WTC11 (cell line): ENCODE measurements at regions of chr13 and their contacts with region 1.

Region 1: GRCh38 chr13:53250266-53250875 is 221.8 kb downstream of the OLFM4 start:
- DNase-seq: no peak
- ATAC-seq: peak; percentile 64
- H3K4me3 Mint-ChIP-seq: no peak overlapping the region
- H3K27ac Mint-ChIP-seq: no peak overlapping the region
- H3K4me1 Mint-ChIP-seq: 0 out of 2 replicates have a peak, but pooled peaks cover 6% of the 10 kb centered on the region
- H3K27me3 Mint-ChIP-seq: peaks cover 49% of the 10 kb centered on the region
- CTCF ChIP-seq: peak; percentile 45; the same call in 1 of the 2 replicates

Region 2: DNA sequence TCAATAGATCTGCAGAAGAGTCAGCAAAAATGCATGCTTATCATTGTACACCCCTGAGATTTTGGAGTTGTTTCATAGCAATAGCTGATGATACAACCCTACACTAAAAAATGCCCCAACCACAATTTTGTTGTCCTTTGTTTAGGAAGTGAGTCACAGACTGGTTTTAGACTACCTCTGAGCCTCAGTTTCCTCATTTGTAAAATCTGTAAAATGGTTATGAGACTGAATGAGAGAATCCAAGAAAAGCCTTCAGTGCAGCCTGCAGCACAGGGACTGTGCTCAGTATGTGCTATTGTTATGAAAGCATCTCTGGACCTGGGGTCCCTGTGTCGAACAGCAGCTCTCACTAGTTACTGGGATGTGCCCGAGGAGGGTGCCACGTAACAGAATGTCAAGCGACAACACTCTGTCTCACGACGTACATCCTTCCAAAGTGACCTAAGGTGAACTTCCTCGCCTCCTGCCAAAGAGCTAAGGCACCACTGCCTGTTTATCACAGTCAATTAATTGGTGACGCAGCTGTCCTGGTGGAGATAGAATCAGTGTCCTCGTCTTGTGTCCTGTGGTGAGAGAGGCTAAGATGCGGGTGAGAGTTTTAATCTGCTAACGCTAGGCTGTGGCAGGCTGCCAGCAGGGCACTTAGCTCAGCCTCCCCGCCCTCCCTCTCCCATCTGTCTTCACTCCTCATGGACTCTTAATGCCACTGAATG is 1464.5 kb before region 1 on chr13:
- CTCF ChIA-PET with region 1: no interaction called
- POLR2A ChIA-PET with region 1: no interaction called
- DNase-seq: no peak
- ATAC-seq: no peak; the same call in 1 of the 2 replicates
- H3K4me3 Mint-ChIP-seq: no peak overlapping the region
- H3K27ac Mint-ChIP-seq: no peak overlapping the region
- H3K4me1 Mint-ChIP-seq: peaks cover 10% of the 10 kb centered on the region
- H3K27me3 Mint-ChIP-seq: no peaks in the 10 kb centered on the region
- CTCF ChIP-seq: no peak

Region 3: DNA sequence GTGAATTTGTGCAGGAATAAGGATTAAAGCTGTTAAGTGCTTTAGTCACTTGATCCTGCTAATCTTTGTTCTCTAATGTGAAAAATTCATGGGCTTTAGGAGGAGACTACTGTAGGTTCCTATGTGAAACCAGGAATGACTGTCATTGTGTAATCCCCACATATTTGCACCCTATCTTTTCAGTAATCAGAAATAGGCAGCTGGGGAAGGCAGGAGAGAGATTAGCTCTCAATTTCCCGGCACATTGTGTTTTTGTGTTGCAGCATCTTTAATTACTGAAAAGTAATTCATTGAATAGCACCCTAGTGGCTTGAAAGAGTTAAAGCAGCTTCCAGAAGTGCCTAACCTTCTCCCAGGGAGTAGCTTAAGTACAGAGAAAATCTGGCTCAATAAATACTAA is 61.2 kb after region 1 on chr13:
- CTCF ChIA-PET with region 1: interaction called, 10 read pairs
- POLR2A ChIA-PET with region 1: no interaction called
- DNase-seq: no peak
- ATAC-seq: peak; percentile 60
- H3K4me3 Mint-ChIP-seq: no peak overlapping the region
- H3K27ac Mint-ChIP-seq: no peak overlapping the region
- H3K4me1 Mint-ChIP-seq: peaks cover 23% of the 10 kb centered on the region
- H3K27me3 Mint-ChIP-seq: peaks cover 79% of the 10 kb centered on the region
- CTCF ChIP-seq: no peak

Region 4: DNA sequence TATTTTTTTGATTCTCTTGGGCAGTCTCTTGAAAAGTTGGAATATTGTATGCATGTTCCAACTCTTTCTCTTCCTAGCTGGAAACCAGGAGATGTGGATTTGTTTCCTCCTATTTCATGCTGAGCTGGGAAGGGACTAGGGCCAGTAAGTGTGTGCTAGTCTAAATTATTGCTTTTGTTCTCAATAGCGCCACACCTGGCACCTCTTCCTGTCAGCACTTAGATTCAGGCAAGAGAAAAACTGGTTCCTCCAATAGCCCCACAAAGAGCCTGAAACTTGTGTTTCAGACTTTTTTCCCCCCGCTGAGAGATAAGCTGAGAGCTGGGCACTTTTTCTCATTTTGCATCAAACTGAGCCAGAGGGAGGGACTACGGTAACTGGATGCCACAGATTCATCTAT is 131.6 kb after region 1 on chr13:
- CTCF ChIA-PET with region 1: interaction called, 11 read pairs
- POLR2A ChIA-PET with region 1: interaction called, 4 read pairs
- DNase-seq: peak; percentile 39
- ATAC-seq: peak; percentile 98
- H3K4me3 Mint-ChIP-seq: no peak overlapping the region
- H3K27ac Mint-ChIP-seq: no peak overlapping the region
- H3K4me1 Mint-ChIP-seq: peaks cover 17% of the 10 kb centered on the region
- H3K27me3 Mint-ChIP-seq: peaks cover 5% of the 10 kb centered on the region; the same call in 1 of the 2 replicates
- CTCF ChIP-seq: no peak

Region 5: GRCh38 chr13:53411463-53411862 is 161.1 kb after region 1 on chr13:
- CTCF ChIA-PET with region 1: interaction called, 17 read pairs
- POLR2A ChIA-PET with region 1: no interaction called
- DNase-seq: no peak
- ATAC-seq: no peak
- H3K4me3 Mint-ChIP-seq: no peak overlapping the region
- H3K27ac Mint-ChIP-seq: no peak overlapping the region
- H3K4me1 Mint-ChIP-seq: no peaks in the 10 kb centered on the region
- H3K27me3 Mint-ChIP-seq: no peaks in the 10 kb centered on the region
- CTCF ChIP-seq: no peak

Region 6: DNA sequence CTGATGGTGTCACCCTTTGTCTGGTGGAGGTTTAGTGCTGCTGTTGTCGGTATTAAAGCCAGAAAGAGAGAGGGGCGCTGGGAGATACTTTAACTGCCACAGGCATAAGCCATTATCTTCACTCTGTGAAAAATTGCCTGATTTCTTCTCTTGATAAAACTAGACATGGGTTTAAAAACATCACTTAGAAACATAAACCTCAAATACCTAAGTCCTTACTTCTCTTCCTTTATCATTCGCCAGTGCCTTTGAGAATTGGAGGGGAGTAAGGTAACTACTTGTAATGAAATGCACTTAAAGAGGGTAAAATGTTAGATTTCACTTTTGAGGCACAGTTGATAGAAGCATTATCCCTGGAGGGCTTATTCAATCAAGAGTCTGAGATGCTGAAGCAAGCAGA is 212.7 kb after region 1 on chr13:
- CTCF ChIA-PET with region 1: no interaction called
- POLR2A ChIA-PET with region 1: no interaction called
- DNase-seq: no peak
- ATAC-seq: no peak
- H3K4me3 Mint-ChIP-seq: no peak overlapping the region
- H3K27ac Mint-ChIP-seq: no peak overlapping the region
- H3K4me1 Mint-ChIP-seq: peaks cover 7% of the 10 kb centered on the region; the same call in 1 of the 2 replicates
- H3K27me3 Mint-ChIP-seq: no peaks in the 10 kb centered on the region; the same call in 1 of the 2 replicates
- CTCF ChIP-seq: no peak